Sigmoid colon (tissue), 7 donors: ENCODE measurements at regions of chr14 and their contacts with region 1.

Region 1: GRCh38 chr14:68780358-68781160 is 12.3 kb downstream of the ZFP36L1 start:
- DNase-seq: peak; percentile 91
- H3K4me3 ChIP-seq: no peak overlapping the region
- H3K27ac ChIP-seq: peak overlapping the region; percentile 73 to 99 (median 80)
- H3K4me1 ChIP-seq: peaks cover 0 to 49% (median 46%) of the 10 kb centered on the region in 4 donors
- H3K27me3 ChIP-seq: no peaks in the 10 kb centered on the region
- CTCF ChIP-seq: no peak
- EP300 ChIP-seq: no peak
- POLR2A ChIP-seq: no peak

Region 2: GRCh38 chr14:68655911-68656360 is 124.6 kb before region 1 on chr14:
- intact Hi-C with region 1: loop called (anchors 5 kb)
- DNase-seq: no peak
- H3K4me3 ChIP-seq: no peak overlapping the region
- H3K27ac ChIP-seq: peak overlapping the region; percentile 7 to 95 (median 91)
- H3K4me1 ChIP-seq: peaks cover 0 to 86% (median 78%) of the 10 kb centered on the region in 4 donors
- H3K27me3 ChIP-seq: no peaks in the 10 kb centered on the region
- CTCF ChIP-seq: no peak
- EP300 ChIP-seq: no peak
- POLR2A ChIP-seq: no peak

Region 3: GRCh38 chr14:68834816-68835215 is 54.3 kb after region 1 on chr14:
- intact Hi-C with region 1: no loop called
- DNase-seq: no peak
- H3K4me3 ChIP-seq: no peak overlapping the region
- H3K27ac ChIP-seq: no peak overlapping the region
- H3K4me1 ChIP-seq: no peaks in the 10 kb centered on the region
- H3K27me3 ChIP-seq: no peaks in the 10 kb centered on the region
- CTCF ChIP-seq: no peak
- EP300 ChIP-seq: no peak
- POLR2A ChIP-seq: no peak